ENCODE measurements at regions of chr16 and their contacts with region 1.

Region 1: GRCh38 chr16:86072328-86073102 is 173.6 kb downstream of the IRF8 start:
- DNase-seq: peak; percentile 4
- H3K4me3 ChIP-seq: no peak overlapping the region
- CTCF ChIP-seq: peak; percentile 78

Region 2: DNA sequence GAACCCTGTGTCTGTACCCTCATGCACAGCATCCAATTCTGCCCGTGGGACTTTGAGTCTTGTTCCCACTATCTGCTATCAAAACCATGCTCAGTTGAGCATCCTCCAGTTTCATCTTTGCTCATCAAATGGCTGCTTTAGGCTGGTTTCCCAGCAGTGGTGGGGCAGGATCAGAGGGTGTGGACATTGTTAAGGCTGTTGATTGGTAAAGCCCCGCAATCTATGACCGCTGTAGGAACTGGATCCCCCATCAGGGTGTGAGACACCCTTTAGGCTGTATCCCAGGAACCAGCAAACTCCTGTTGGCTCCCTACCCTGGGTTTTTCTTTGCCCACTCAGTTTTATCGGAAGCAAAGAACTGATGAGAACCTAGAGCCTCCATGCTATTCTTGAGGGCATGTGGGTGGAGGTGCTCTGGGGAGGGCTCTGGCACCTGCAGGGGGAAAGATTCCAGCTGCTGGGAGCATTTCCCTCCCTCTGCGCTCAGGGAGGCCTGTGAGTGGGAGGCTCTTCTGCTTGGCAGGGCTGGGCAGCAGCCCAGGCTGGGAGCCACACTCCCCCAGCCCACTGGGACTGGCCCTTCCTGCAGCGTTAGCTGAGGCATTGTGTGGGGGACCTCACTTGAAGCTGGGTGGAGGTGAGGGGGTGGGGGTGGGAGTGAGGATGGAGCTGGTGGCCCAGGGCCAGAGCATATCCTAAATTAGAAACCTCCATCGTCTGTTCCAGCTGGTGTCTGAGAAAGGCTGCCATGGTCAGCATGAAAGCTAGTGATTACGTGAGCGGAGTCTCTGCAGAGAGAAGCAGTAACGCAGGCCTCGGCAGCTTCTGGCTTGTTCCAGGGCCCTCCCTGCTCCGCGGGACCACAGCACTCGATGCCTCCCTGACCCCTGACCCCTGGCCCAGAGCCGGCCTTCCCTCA is 13.0 kb before region 1 on chr16:
- CTCF ChIA-PET with region 1: interaction called, 13 read pairs
- POLR2A ChIA-PET with region 1: no interaction called
- DNase-seq: no peak
- H3K4me3 ChIP-seq: no peak overlapping the region
- CTCF ChIP-seq: no peak

Region 3: GRCh38 chr16:86165479-86165878 is 93.0 kb after region 1 on chr16:
- CTCF ChIA-PET with region 1: no interaction called
- POLR2A ChIA-PET with region 1: no interaction called
- DNase-seq: no peak
- H3K4me3 ChIP-seq: no peak overlapping the region
- CTCF ChIP-seq: no peak

Region 4: GRCh38 chr16:86510465-86511261 is 438.1 kb after region 1 on chr16 and contains the start of gene FOXF1:
- CTCF ChIA-PET with region 1: interaction called, 685 read pairs
- POLR2A ChIA-PET with region 1: interaction called, 3 read pairs
- DNase-seq: no peak
- H3K4me3 ChIP-seq: peak within 1 kb of the TSS; percentile 64
- CTCF ChIP-seq: no peak

Region 5: GRCh38 chr16:86537486-86537885 is 465.0 kb after region 1 on chr16:
- CTCF ChIA-PET with region 1: interaction called, 10 read pairs
- POLR2A ChIA-PET with region 1: no interaction called
- DNase-seq: no peak
- H3K4me3 ChIP-seq: no peak overlapping the region
- CTCF ChIP-seq: no peak